Mammary epithelial cell (primary cell): ENCODE measurements at regions of chr18 and their contacts with region 1.

Region 1: DNA sequence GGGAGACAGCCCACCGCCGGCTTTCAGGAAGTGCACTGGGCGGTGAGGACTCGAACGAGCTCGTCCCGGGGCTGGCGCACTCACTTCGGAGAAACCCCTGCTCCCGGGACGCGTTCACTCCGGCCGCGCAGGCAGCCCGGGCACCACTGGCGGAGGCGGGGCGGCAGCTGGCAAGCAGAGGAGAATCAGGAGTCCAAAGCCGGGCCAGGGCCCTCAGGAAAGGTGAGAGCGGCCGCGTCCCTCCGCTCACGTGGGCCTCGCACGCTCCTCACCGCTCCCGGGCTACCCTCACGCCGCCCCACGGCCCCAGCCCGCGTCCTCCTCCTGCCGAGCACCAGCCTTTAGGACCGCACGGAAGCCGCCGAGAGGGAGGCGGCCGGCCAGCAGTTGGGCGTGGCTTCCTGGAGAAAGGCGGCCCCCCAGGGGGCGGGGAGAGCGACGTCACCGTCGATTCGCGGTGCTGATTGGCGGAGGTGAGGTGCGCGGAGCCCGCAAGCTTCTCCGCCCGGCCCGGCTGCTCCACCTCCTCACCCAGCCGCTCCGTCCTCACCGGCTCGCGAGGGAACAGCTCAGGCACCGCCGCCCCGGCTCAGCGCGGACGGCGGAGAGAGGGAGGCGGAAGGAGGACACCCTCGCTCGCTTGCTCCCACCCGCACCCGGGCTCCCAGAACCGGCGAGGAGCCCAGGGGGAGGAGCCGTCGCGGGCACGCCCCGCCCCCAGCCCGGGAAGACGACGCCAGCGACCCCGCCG is at the start of gene ZCCHC2:
- DNase-seq: peak; percentile 98
- H3K4me3 ChIP-seq: peak within 1 kb of the TSS; percentile 96 to 97 (median 96)
- H3K27ac ChIP-seq: peak within 1 kb of the TSS; percentile 83
- H3K4me1 ChIP-seq: peaks cover 25% of the 10 kb centered on the region
- H3K27me3 ChIP-seq: no peaks in the 10 kb centered on the region
- CTCF ChIP-seq: no peak
- total RNA-seq, gene ZCCHC2: 13.7 to 16.2 TPM

Region 2: DNA sequence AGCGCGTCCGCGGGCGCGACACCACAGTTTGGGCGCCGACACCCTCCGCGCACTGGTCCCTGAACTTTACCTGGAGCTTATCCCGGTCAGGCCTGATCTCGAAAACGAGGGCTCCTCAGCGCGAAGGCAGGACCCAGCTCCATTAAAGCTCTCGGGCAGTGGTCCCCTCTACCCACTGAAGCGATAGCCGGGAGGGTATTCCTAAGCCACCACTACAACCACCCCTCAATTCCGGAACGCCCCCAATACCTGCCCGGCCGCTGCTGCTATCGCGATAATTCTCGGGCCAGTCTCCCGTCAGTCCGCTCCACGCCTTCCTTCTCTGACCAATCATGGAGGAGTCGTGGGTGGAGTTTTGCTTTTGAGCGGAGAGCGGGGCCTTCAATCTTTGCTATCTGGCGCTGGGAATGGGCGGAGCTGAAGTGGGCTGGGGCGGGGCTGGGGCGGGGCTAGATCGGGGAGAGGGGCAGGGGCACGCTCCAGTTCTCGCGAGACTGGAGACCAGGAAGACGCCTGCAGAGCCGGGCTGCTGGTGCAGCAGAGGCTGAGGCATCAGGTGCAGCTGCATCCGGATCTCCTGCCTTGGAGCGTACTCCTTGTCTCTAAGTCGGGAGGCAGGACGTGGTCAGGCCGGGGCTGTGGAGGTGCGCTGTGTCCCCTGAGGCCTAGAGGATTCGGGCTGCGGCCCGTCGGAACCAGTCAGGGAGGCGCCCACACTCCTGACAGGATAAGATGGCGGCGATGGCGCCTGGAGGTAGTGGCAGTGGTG is 335.7 kb before region 1 on chr18 and contains the starts of genes PIGN and RELCH:
- CTCF ChIA-PET with region 1: interaction called, 4 read pairs
- dilution Hi-C with region 1: no loop called
- in situ Hi-C with region 1: no loop called
- intact Hi-C with region 1: loop called (anchors 10 kb)
- DNase-seq: peak; percentile 99
- H3K4me3 ChIP-seq: peak within 1 kb of the TSS; percentile 73 to 98 (median 80)
- H3K27ac ChIP-seq: peak within 1 kb of the TSS; percentile 68
- H3K4me1 ChIP-seq: no peaks in the 10 kb centered on the region
- H3K27me3 ChIP-seq: no peaks in the 10 kb centered on the region
- CTCF ChIP-seq: no peak
- total RNA-seq, gene PIGN: 46.3 to 49.5 TPM
- total RNA-seq, gene RELCH: 24.6 to 36.5 TPM

Region 3: GRCh38 chr18:62312851-62313250 is 209.8 kb before region 1 on chr18:
- CTCF ChIA-PET with region 1: no interaction called
- dilution Hi-C with region 1: no loop called
- in situ Hi-C with region 1: no loop called
- intact Hi-C with region 1: no loop called
- DNase-seq: no peak
- H3K4me3 ChIP-seq: no peak overlapping the region
- H3K27ac ChIP-seq: no peak overlapping the region
- H3K4me1 ChIP-seq: no peaks in the 10 kb centered on the region
- H3K27me3 ChIP-seq: no peaks in the 10 kb centered on the region
- CTCF ChIP-seq: no peak

Region 4: DNA sequence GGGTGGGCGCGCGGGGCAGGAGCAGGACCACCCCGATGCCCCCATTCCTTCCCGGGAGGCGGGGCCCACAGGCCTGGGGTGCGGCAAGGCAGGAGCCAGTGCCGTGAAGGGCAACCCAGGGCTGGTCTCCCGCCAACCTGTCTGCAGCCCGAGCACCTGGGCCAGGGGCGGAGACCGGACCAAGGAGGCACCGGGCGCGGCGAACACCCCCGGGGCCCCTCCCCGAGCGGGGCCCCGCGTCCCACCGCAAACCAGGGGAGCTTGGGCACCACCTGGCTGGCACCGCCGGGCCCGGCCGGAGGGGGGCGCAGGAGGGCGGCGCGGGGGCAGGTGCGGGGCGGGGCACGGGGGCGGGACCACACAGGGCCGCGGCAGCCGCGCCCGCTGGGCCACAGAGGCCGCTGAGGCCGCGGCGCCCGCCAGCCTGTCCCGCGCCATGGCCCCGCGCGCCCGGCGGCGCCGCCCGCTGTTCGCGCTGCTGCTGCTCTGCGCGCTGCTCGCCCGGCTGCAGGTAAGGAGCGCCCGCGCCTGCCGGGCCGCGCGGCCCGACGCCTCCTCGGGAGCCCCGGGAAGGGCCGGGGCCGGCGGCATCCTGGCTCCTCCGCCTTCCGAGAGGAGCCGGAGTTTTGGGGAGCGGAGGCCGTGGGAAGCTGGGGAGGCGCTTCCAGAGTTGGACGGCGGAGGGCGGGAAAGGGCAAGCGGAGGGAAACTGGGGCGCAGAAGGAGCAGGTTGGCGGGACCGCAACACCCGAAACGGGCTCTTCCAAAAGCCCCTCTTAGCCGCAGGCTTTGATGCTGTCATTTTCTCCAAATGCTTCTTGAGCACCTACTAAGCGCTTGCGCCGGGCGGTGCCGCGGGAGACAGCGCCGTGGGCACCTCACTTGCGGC is 197.5 kb before region 1 on chr18 and contains the start of gene TNFRSF11A:
- CTCF ChIA-PET with region 1: no interaction called
- dilution Hi-C with region 1: no loop called
- in situ Hi-C with region 1: no loop called
- intact Hi-C with region 1: loop called (anchors 5 kb)
- DNase-seq: peak; percentile 58
- H3K4me3 ChIP-seq: peak within 1 kb of the TSS; percentile 54 to 71 (median 64)
- H3K27ac ChIP-seq: no peak within 1 kb of the TSS
- H3K4me1 ChIP-seq: peaks cover 14% of the 10 kb centered on the region
- H3K27me3 ChIP-seq: peaks cover 3% of the 10 kb centered on the region
- CTCF ChIP-seq: peak; percentile 7 to 47
- total RNA-seq, gene TNFRSF11A: 0.50 to 6.1 TPM

Region 5: GRCh38 chr18:62425465-62426195 is 97.0 kb before region 1 on chr18:
- CTCF ChIA-PET with region 1: no interaction called
- dilution Hi-C with region 1: no loop called
- in situ Hi-C with region 1: no loop called
- intact Hi-C with region 1: loop called (anchors 1 kb)
- DNase-seq: peak; percentile 93
- H3K4me3 ChIP-seq: peak overlapping the region in 2 of 3 experiments; percentile 1 to 9
- H3K27ac ChIP-seq: peak overlapping the region; percentile 41
- H3K4me1 ChIP-seq: peaks cover 12% of the 10 kb centered on the region
- H3K27me3 ChIP-seq: no peaks in the 10 kb centered on the region
- CTCF ChIP-seq: peak; percentile 83 to 91

Region 6: GRCh38 chr18:62458346-62458745 is 64.3 kb before region 1 on chr18:
- CTCF ChIA-PET with region 1: no interaction called
- dilution Hi-C with region 1: no loop called
- in situ Hi-C with region 1: no loop called
- intact Hi-C with region 1: loop called (anchors 1 kb)
- DNase-seq: peak; percentile 12
- H3K4me3 ChIP-seq: no peak overlapping the region
- H3K27ac ChIP-seq: no peak overlapping the region
- H3K4me1 ChIP-seq: no peaks in the 10 kb centered on the region
- H3K27me3 ChIP-seq: no peaks in the 10 kb centered on the region
- CTCF ChIP-seq: peak in 1 of 2 donors; percentile 40

Region 7: GRCh38 chr18:62485684-62486083 is 37.0 kb before region 1 on chr18:
- CTCF ChIA-PET with region 1: no interaction called
- dilution Hi-C with region 1: no loop called
- in situ Hi-C with region 1: no loop called
- intact Hi-C with region 1: loop called (anchors 1 kb)
- DNase-seq: peak; percentile 96
- H3K4me3 ChIP-seq: peak overlapping the region in 1 of 3 experiments; percentile 20
- H3K27ac ChIP-seq: peak overlapping the region; percentile 88
- H3K4me1 ChIP-seq: peaks cover 20% of the 10 kb centered on the region
- H3K27me3 ChIP-seq: no peaks in the 10 kb centered on the region
- CTCF ChIP-seq: no peak

Region 8: DNA sequence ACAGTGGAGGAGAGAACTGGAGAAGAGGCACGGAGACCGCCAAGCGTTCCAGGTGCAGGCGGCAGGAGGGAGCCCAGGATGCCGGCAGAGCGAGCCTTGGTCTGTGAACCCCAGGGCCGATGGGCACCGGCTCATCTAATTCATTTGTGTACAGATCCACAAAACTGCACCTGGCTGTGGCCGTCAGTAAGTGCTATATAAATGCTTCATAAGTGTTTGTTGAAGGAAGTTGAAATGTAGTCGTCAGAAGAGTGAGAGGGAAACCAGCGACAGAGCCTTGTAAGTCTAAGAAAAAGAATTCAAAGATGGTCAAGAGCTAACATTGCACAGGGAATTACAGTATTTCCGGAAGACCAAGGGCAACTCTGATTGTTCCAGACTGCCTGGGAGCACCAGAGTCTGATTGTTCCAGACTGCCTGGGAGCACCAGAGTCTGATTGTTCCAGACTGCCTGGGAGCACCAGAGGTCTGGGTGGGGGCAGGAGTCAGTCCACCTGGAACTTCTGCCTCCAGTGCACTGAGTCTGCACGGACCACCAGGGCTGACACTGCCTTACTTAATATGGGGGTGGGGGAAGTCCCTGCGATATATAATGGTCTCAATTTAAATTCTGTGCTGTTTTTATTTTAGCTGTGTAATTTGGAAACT is 684.6 kb after region 1 on chr18:
- CTCF ChIA-PET with region 1: no interaction called
- dilution Hi-C with region 1: no loop called
- in situ Hi-C with region 1: no loop called
- intact Hi-C with region 1: no loop called
- DNase-seq: no peak
- H3K4me3 ChIP-seq: no peak overlapping the region
- H3K27ac ChIP-seq: no peak overlapping the region
- H3K4me1 ChIP-seq: peaks cover 3% of the 10 kb centered on the region
- H3K27me3 ChIP-seq: peaks cover 3% of the 10 kb centered on the region
- CTCF ChIP-seq: no peak

Region 9: GRCh38 chr18:63422087-63422809 is 899.6 kb after region 1 on chr18 and contains the start of gene VPS4B:
- CTCF ChIA-PET with region 1: no interaction called
- dilution Hi-C with region 1: no loop called
- in situ Hi-C with region 1: no loop called
- intact Hi-C with region 1: loop called (anchors 10 kb)
- DNase-seq: peak; percentile 99
- H3K4me3 ChIP-seq: peak within 1 kb of the TSS; percentile 90 to 96 (median 94)
- H3K27ac ChIP-seq: peak within 1 kb of the TSS; percentile 99
- H3K4me1 ChIP-seq: peaks cover 33% of the 10 kb centered on the region
- H3K27me3 ChIP-seq: no peaks in the 10 kb centered on the region
- CTCF ChIP-seq: no peak
- total RNA-seq, gene VPS4B: 60.8 to 94.4 TPM